ENCODE measurements at regions of chr12 and their contacts with region 1.

Region 1: GRCh38 chr12:6470375-6471163 is at the start of gene VAMP1:
- DNase-seq: peak; percentile 90
- H3K4me3 ChIP-seq: peak within 1 kb of the TSS; percentile 84
- H3K27ac ChIP-seq: peak within 1 kb of the TSS; percentile 87
- H3K27me3 ChIP-seq: no peaks in the 10 kb centered on the region
- CTCF ChIP-seq: no peak
- polyA plus RNA-seq, gene VAMP1: 15.1 and 18.3 TPM in 2 replicates

Region 2: DNA sequence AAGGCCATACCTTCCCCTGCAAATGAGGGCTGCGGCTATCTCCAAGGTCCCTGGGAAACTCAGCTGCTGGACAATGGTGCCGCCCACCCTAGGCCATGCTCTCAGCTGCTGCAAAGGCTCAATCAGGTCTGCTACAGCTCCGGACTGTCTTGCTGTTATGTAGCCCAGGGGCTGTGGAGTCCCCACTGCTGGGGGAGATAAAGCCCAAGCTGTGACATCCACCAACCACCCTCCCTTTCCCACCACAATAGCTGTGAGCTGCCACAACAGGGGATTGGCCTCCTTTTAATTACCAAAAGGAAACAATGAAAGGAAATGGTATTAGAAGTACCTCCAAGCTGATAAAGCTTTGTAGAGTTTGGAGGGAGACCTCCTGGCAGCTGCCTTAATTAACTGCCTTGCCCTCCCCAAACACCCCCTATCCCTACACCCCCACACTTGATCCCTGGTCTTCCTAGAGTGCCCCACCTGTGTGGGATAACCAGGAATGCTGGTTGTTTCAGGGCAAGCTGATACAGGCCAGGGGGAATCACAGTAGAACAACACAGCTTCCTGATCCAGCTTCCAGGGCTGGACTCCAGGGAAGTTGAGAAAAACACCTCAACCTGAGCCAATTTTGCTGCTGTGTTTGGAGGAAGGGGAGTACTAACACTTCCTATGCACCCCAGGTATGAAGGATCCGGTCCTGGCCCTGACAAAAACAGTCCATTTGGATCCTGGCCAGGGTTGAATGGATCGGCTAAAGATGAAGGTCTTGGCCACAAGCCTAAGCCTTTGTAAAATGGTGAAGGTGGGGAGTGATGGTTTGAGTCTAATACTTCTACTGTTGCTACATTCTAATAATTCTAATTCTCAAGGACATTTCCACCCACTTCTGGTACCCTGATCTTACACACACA is 345.9 kb before region 1 on chr12 and contains the start of gene VWF:
- CTCF ChIA-PET with region 1: no interaction called
- POLR2A ChIA-PET with region 1: no interaction called
- DNase-seq: no peak
- H3K4me3 ChIP-seq: no peak within 1 kb of the TSS
- H3K27ac ChIP-seq: no peak within 1 kb of the TSS
- H3K27me3 ChIP-seq: peaks cover 2% of the 10 kb centered on the region
- CTCF ChIP-seq: no peak
- polyA plus RNA-seq, gene VWF: 0.22 and 0.35 TPM in 2 replicates

Region 3: DNA sequence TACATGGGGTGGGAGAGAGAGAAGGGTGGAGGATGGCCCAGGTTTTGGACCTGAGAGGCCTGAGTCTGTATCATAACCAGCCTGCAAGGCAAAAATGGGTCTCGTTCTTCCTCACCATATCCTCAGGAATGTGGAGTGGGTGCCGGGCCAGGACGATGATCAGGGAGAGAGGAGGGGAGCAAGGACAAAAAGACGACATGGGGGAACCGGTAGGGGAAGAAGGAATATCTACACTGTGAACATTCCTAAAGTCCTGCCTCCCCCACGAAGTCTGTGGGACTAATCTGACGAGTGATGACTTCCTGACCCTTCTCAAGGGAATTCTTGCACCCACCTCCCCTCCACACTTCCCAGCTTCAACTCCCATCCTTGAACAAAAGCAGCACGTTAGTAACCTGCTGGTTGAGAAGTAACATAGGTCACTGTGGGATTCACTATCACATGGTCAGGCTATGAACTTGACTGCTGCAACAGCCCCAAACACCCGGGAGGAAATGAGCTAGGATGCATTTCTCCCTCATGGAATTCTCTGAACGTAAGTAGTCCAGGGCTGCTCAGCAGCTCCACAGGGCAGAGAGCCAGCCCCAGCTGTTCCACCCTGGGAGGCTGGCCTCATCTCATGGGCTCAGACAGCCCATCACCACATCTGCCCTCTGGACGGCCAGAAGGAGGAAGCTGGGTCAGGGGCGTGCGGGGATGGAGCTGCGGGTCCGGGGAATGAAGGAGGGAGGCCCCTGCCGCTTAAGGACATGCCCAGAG is 309.3 kb before region 1 on chr12:
- CTCF ChIA-PET with region 1: no interaction called
- POLR2A ChIA-PET with region 1: no interaction called
- DNase-seq: peak; percentile 74
- H3K4me3 ChIP-seq: no peak overlapping the region
- H3K27ac ChIP-seq: peak overlapping the region; percentile 73
- H3K27me3 ChIP-seq: no peaks in the 10 kb centered on the region
- CTCF ChIP-seq: no peak

Region 4: DNA sequence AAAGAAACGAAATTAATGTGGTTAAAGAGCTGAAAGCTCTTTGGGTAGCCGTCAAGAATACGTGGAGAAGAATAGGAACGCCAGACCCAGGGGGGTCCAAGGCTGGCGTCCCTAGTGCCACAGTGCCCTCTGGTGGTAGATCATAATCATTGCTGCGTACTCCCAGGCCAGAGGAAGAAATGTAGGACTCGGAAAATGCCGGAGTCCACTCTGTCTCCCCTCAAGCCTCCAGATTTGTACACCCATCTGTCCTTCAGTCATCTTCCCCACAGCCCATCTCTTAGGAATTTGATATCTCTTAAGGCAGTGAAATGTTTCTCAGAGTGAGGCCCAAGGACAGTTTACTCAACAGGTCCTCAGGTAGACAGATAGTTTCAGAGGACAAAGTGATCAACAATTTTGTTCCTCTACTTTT is 185.5 kb before region 1 on chr12:
- CTCF ChIA-PET with region 1: interaction called, 27 read pairs
- POLR2A ChIA-PET with region 1: interaction called, 4 read pairs
- DNase-seq: no peak
- H3K4me3 ChIP-seq: no peak overlapping the region
- H3K27ac ChIP-seq: peak overlapping the region; percentile 52
- H3K27me3 ChIP-seq: no peaks in the 10 kb centered on the region
- CTCF ChIP-seq: peak; percentile 91

Region 5: DNA sequence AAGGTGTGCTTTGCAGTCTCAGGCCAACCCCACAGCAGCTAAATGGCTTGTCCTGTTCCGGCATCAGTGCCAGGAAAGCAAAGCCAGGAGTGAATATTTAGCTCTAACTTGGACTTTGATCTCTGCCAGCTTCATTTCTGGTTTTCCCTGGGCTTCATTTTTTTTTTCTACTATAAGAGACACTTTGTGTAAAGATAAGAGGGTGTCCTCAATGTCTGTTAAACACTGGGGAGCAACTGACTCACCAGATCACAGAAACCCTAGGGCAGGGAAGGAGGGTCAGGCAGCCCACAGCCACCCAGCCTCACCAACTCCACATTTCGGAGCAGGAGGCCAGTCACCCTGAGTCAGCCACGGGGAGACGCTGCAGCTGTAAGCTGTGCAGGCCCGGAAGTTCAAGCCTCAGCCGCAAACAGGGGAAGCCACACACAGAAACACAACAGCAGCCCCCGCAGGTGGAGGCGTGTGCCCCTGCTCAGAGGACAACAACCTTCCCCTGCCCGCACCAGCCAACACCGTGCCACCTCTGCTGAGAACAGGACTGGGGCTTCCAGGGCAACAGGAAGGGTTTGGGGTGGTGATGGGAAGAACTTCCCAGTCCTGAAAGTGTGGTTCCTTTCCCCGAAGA is 135.0 kb before region 1 on chr12:
- CTCF ChIA-PET with region 1: interaction called, 33 read pairs
- POLR2A ChIA-PET with region 1: interaction called, 28 read pairs
- DNase-seq: peak; percentile 53
- H3K4me3 ChIP-seq: peak overlapping the region; percentile 58
- H3K27ac ChIP-seq: peak overlapping the region; percentile 100
- H3K27me3 ChIP-seq: no peaks in the 10 kb centered on the region
- CTCF ChIP-seq: peak; percentile 53

Region 6: DNA sequence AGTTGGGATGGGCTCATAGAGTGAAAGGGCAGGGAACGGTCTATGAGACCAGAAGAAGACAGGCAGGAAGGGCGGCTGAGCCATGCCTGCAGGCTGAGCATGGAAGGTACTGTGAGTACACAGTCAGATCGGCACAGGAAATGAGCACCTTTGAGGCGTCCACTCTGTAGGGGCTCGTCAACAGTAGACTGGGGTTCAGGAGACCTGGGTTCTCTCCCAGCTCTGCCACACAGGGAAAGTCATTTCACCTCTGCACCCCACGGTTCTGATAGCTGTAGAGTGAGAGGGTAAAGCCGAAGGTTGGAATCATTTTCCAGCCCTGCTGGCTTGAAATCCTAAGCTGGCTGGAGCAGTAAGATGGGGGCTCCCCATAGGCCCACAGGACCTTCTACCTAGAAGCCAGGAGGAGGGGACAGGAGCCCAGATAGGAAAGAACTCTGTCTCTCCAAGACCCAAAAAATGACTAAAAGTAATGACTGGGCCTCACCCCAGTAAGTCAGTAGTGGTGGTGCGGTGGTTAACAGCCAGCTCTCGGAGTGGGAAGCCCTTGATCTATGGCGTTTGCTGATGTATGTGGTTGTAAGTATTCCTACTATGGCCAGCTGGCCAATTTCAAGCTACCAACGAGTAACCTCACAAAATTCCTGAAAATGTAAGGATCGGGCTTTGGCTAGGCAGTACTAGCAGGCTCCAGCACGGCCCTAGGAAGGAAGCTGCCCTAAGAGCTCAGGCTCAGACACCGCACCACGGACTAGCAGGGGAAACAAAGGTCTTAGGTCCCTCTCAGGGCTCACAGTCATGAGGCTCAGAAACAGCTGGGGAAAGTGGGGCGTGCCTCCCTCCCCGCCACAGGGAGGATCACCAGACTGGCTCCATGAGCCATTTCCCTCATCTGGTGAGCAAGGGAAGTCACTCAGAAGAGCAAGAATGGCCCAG is 36.1 kb before region 1 on chr12:
- CTCF ChIA-PET with region 1: interaction called, 25 read pairs
- POLR2A ChIA-PET with region 1: interaction called, 7 read pairs
- DNase-seq: no peak
- H3K4me3 ChIP-seq: no peak overlapping the region
- H3K27ac ChIP-seq: peak overlapping the region; percentile 25
- H3K27me3 ChIP-seq: no peaks in the 10 kb centered on the region
- CTCF ChIP-seq: no peak

Region 7: DNA sequence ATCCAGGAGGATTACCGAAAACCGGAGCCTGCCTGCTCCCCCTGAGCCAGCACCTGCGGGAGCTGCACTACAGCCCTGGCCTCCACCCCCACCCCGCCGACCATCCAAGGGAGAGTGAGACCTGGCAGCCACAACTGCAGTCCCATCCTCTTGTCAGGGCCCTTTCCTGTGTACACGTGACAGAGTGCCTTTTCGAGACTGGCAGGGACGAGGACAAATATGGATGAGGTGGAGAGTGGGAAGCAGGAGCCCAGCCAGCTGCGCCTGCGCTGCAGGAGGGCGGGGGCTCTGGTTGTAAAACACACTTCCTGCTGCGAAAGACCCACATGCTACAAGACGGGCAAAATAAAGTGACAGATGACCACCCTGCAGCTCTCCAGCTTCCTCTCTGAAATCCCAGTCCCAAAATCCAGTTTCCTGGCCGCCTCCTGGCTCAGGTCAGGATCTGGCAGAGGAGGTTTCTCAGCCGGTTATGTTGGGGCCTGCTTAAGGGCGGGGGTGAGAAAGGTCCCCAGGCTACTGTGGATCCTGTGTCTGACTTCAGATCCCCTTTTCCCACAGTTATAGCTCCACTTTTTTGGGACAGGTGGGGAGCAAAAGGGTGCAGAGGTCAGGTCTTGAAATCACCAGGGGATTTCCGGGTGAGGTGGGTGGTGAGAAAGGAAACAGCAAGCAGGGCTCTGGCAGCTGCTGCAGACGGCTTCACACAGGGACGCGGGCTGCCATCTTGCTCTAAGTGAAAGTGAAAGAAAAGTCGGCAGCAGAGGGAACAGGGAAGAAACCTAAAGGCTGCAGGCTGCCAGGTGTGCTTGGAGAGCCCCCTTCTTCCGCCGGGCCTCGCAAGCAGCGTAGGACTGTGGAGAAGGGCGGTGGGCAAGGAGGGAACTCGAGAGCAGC is 19.0 kb before region 1 on chr12 and contains the start of gene TAPBPL:
- CTCF ChIA-PET with region 1: interaction called, 41 read pairs
- POLR2A ChIA-PET with region 1: interaction called, 28 read pairs
- DNase-seq: no peak
- H3K4me3 ChIP-seq: peak within 1 kb of the TSS; percentile 73
- H3K27ac ChIP-seq: peak within 1 kb of the TSS; percentile 93
- H3K27me3 ChIP-seq: no peaks in the 10 kb centered on the region
- CTCF ChIP-seq: no peak
- polyA plus RNA-seq, gene TAPBPL: 10.2 and 13.5 TPM in 2 replicates

Region 8: DNA sequence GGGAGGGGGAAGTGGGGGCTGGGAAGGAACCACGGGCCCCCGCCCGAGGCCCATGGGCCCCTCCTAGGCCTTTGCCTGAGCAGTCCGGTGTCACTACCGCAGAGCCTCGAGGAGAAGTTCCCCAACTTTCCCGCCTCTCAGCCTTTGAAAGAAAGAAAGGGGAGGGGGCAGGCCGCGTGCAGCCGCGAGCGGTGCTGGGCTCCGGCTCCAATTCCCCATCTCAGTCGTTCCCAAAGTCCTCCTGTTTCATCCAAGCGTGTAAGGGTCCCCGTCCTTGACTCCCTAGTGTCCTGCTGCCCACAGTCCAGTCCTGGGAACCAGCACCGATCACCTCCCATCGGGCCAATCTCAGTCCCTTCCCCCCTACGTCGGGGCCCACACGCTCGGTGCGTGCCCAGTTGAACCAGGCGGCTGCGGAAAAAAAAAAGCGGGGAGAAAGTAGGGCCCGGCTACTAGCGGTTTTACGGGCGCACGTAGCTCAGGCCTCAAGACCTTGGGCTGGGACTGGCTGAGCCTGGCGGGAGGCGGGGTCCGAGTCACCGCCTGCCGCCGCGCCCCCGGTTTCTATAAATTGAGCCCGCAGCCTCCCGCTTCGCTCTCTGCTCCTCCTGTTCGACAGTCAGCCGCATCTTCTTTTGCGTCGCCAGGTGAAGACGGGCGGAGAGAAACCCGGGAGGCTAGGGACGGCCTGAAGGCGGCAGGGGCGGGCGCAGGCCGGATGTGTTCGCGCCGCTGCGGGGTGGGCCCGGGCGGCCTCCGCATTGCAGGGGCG is 63.5 kb after region 1 on chr12 and contains the start of gene GAPDH:
- CTCF ChIA-PET with region 1: interaction called, 16 read pairs
- POLR2A ChIA-PET with region 1: interaction called, 45 read pairs
- DNase-seq: peak; percentile 91
- H3K4me3 ChIP-seq: peak within 1 kb of the TSS; percentile 97
- H3K27ac ChIP-seq: peak within 1 kb of the TSS; percentile 95
- H3K27me3 ChIP-seq: no peaks in the 10 kb centered on the region
- CTCF ChIP-seq: 0 out of 2 replicates have a peak, but pooled peaks have one; percentile 1
- polyA plus RNA-seq, gene GAPDH: 9,160 and 11,356 TPM in 2 replicates

Region 9: GRCh38 chr12:7162691-7163114 is 692.1 kb after region 1 on chr12:
- CTCF ChIA-PET with region 1: no interaction called
- POLR2A ChIA-PET with region 1: no interaction called
- DNase-seq: no peak
- H3K4me3 ChIP-seq: no peak overlapping the region
- H3K27ac ChIP-seq: no peak overlapping the region
- H3K27me3 ChIP-seq: peaks cover 22% of the 10 kb centered on the region
- CTCF ChIP-seq: peak; percentile 54

Region 10: GRCh38 chr12:7310070-7310469 is 839.5 kb after region 1 on chr12:
- CTCF ChIA-PET with region 1: no interaction called
- POLR2A ChIA-PET with region 1: no interaction called
- DNase-seq: no peak
- H3K4me3 ChIP-seq: no peak overlapping the region
- H3K27ac ChIP-seq: no peak overlapping the region
- H3K27me3 ChIP-seq: no peaks in the 10 kb centered on the region
- CTCF ChIP-seq: no peak

Measured in AG04450 (cell line).